GM12878 (cell line): ENCODE measurements at regions of chr5 and their contacts with region 1.

Region 1: DNA sequence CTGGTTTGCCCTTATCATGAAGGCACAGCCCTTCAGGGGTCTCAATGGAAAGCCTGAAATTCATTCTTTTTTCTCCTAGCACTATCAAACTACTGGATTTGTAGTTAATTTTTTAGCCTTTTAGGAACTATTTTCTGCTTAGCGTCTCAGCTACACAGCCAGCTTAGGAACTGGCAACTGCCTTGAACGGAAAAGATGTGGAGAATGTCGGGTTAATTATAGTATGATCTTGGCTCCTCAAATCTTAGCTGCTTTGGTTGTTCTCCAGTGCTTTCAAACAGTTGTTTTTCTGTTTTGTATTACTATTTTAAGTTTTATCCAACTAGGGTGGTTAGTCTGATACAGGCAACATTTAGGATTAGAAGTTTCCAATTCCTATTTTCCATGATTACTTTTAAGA is 44.1 kb downstream of the CCNH start:
- DNase-seq: no peak
- ATAC-seq: no peak
- H3K4me3 ChIP-seq: no peak overlapping the region
- H3K27ac ChIP-seq: no peak overlapping the region
- H3K4me1 ChIP-seq: no peaks in the 10 kb centered on the region
- H3K27me3 ChIP-seq: no peaks in the 10 kb centered on the region
- CTCF ChIP-seq: no peak
- EP300 ChIP-seq: no peak
- POLR2A ChIP-seq: no peak
- RAD21 ChIP-seq: no peak

Region 2: GRCh38 chr5:87354496-87354895 is 14.1 kb before region 1 on chr5:
- CTCF ChIA-PET with region 1: interaction called, 3 read pairs
- POLR2A ChIA-PET with region 1: interaction called, 4 read pairs
- RAD21 ChIA-PET with region 1: no interaction called
- SMC1A ChIA-PET with region 1: interaction called, 14 read pairs
- in situ Hi-C with region 1: no loop called
- intact Hi-C with region 1: no loop called
- DNase-seq: peak; percentile 27
- ATAC-seq: peak; percentile 84
- H3K4me3 ChIP-seq: no peak overlapping the region
- H3K27ac ChIP-seq: no peak overlapping the region
- H3K4me1 ChIP-seq: peaks cover 3% of the 10 kb centered on the region; the same call in 1 of the 2 replicates
- H3K27me3 ChIP-seq: no peaks in the 10 kb centered on the region
- CTCF ChIP-seq: no peak
- EP300 ChIP-seq: no peak
- POLR2A ChIP-seq: no peak
- RAD21 ChIP-seq: no peak

Region 3: GRCh38 chr5:87421307-87421706 is 52.7 kb after region 1 on chr5:
- CTCF ChIA-PET with region 1: no interaction called
- POLR2A ChIA-PET with region 1: no interaction called
- RAD21 ChIA-PET with region 1: no interaction called
- SMC1A ChIA-PET with region 1: no interaction called
- in situ Hi-C with region 1: no loop called
- intact Hi-C with region 1: no loop called
- DNase-seq: no peak
- ATAC-seq: no peak
- H3K4me3 ChIP-seq: no peak overlapping the region
- H3K27ac ChIP-seq: no peak overlapping the region
- H3K4me1 ChIP-seq: no peaks in the 10 kb centered on the region
- H3K27me3 ChIP-seq: no peaks in the 10 kb centered on the region
- CTCF ChIP-seq: no peak
- EP300 ChIP-seq: no peak
- POLR2A ChIP-seq: no peak
- RAD21 ChIP-seq: no peak